ENCODE measurements at regions of chr1 and their contacts with region 1.

Region 1: GRCh38 chr1:17661546-17662157 is 93.5 kb upstream of the ACTL8 start:
- DNase-seq: peak; percentile 47 to 61
- ATAC-seq: peak in 7 of 8 donors; percentile 18 to 66 (median 39)
- H3K4me3 ChIP-seq: no peak overlapping the region
- H3K27ac ChIP-seq: no peak overlapping the region
- H3K4me1 ChIP-seq: peaks cover 0 to 5% (median 0%) of the 10 kb centered on the region in 9 donors
- H3K27me3 ChIP-seq: no peaks in the 10 kb centered on the region
- CTCF ChIP-seq: peak; percentile 55 to 86 (median 81)

Region 2: GRCh38 chr1:17892225-17892624 is 230.6 kb after region 1 on chr1:
- intact Hi-C with region 1: loop called in 1 of 10 experiments (anchors 10 kb)
- DNase-seq: peak; percentile 70 to 77
- ATAC-seq: peak; percentile 66 to 92 (median 84)
- H3K4me3 ChIP-seq: no peak overlapping the region
- H3K27ac ChIP-seq: peak overlapping the region in 8 of 10 donors; percentile 52 to 84 (median 75)
- H3K4me1 ChIP-seq: peaks cover 0 to 36% (median 17%) of the 10 kb centered on the region in 9 donors
- H3K27me3 ChIP-seq: peaks cover 0 to 11% (median 4%) of the 10 kb centered on the region in 7 donors
- CTCF ChIP-seq: no peak

Region 3: GRCh38 chr1:18091660-18092446 is 430.2 kb after region 1 on chr1:
- intact Hi-C with region 1: loop called in 2 of 10 experiments (anchors 10 kb)
- DNase-seq: no peak
- ATAC-seq: peak in 1 of 8 donors; percentile 65
- H3K4me3 ChIP-seq: no peak overlapping the region
- H3K27ac ChIP-seq: no peak overlapping the region
- H3K4me1 ChIP-seq: no peaks in the 10 kb centered on the region
- H3K27me3 ChIP-seq: peaks cover 0 to 84% (median 55%) of the 10 kb centered on the region in 7 donors
- CTCF ChIP-seq: no peak

Region 4: DNA sequence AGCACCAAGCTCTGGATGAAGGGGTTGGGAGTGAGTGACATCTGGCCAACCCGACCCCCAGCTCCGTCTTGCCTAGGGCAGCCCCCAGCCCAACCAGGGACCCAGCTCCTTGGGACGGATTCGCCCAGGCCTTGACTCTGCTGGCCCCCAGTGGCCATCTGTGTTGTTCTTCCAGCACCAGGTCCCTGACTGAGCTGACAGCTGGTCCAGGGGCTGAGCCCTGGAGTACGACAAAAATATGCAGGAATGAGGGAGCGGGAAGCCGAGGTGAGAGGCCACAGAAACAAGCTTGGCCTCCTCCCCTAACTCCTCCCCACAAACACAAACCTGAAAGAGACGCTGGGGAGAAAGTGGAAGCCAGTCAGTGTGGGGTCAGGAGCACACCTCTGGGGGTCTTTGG is 914.0 kb after region 1 on chr1:
- intact Hi-C with region 1: loop called in 4 of 10 experiments (anchors 5 to 10 kb)
- DNase-seq: peak; percentile 38 to 75
- ATAC-seq: peak in 5 of 8 donors; percentile 15 to 61 (median 55)
- H3K4me3 ChIP-seq: no peak overlapping the region
- H3K27ac ChIP-seq: no peak overlapping the region
- H3K4me1 ChIP-seq: no peaks in the 10 kb centered on the region
- H3K27me3 ChIP-seq: peaks cover 0 to 54% (median 31%) of the 10 kb centered on the region in 7 donors
- CTCF ChIP-seq: peak in 8 of 9 donors; percentile 20 to 84 (median 68)

Measured in heart right ventricle (tissue), 16 donors.